ENCODE measurements at regions of chr1 and their contacts with region 1.

Region 1: DNA sequence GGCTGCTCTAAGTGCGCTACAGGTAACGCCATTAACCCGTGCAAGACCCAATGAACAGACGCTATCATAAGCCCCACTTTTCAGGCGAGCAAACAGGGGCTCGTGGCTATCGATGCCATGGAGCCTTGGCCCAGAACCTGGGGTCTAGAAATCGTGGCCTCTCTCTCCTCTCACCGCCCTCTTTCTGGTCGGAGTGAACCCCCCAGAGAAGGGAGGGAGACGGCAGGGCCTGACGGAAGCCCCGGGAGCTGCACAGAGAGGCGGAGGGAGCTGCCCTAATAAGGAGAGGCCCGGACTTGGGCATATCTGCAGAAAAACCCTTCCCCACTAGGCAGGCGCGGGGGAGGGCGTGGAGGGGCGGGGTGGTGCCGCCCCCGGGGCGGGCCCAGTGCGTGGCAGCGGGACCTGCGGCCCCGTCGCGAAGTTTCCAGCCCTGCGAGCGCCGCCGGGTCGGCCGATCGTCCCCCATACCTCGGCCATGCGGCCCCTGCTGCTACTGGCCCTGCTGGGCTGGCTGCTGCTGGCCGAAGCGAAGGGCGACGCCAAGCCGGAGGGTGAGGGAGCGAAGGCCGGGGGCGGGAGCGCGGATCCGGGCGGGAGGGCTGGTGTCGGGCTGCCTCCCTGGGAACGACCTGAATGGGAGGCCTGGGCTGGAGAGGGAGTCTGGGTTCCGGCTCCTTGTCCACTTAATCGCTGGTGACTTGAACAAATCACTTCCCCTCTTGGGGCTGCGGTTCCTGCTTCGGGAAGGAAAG is at the start of gene PLOD1:
- DNase-seq: peak; percentile 86
- ATAC-seq: peak; percentile 88
- H3K4me3 ChIP-seq: peak within 1 kb of the TSS; percentile 79
- H3K27ac ChIP-seq: peak within 1 kb of the TSS; percentile 10
- H3K4me1 ChIP-seq: peaks cover 30% of the 10 kb centered on the region
- H3K27me3 ChIP-seq: no peaks in the 10 kb centered on the region
- CTCF ChIP-seq: no peak
- total RNA-seq, gene PLOD1: 179 and 216 TPM in 2 replicates

Region 2: DNA sequence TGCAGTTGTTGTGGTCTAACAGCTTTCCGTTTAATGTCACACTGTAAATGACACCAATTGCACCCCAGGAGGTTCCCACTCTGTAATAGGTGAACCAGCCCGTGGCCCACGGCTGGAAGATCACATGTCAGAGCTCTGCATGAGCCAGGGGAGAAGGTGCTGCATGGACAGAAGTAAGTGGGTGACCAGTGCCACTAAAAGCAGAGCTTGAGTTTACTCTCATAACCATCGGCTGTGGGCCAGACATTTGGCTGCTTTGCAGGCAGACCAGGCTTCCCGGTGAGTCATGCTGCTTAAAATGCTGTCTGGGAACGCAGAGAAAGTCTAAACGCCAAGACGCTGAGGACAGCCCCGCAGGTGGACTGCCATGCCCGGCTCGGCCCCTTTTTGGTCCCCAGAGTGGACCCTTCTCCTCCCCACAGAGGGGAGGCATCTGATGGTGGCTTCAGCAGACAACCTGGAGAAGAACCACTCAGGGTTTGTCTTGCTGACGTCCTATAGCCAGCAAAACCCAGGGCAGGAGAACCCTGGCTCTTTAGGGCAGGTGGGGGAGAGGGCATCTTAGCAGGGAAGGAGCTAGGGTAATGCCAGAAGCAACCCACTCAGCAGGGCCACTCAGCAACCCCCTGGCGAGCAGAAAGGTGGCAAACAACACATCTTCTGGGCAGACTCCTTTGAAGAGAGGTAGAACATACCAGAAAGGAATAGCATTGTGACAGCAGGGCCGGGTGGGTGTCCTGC is 15.5 kb before region 1 on chr1:
- CTCF ChIA-PET with region 1: interaction called, 9 read pairs
- POLR2A ChIA-PET with region 1: interaction called, 17 read pairs
- intact Hi-C with region 1: no loop called
- DNase-seq: peak; percentile 86
- ATAC-seq: peak; percentile 97
- H3K4me3 ChIP-seq: no peak overlapping the region
- H3K27ac ChIP-seq: peak overlapping the region; percentile 43; the same call in 1 of the 2 replicates
- H3K4me1 ChIP-seq: peaks cover 21% of the 10 kb centered on the region
- H3K27me3 ChIP-seq: no peaks in the 10 kb centered on the region
- CTCF ChIP-seq: no peak

Region 3: DNA sequence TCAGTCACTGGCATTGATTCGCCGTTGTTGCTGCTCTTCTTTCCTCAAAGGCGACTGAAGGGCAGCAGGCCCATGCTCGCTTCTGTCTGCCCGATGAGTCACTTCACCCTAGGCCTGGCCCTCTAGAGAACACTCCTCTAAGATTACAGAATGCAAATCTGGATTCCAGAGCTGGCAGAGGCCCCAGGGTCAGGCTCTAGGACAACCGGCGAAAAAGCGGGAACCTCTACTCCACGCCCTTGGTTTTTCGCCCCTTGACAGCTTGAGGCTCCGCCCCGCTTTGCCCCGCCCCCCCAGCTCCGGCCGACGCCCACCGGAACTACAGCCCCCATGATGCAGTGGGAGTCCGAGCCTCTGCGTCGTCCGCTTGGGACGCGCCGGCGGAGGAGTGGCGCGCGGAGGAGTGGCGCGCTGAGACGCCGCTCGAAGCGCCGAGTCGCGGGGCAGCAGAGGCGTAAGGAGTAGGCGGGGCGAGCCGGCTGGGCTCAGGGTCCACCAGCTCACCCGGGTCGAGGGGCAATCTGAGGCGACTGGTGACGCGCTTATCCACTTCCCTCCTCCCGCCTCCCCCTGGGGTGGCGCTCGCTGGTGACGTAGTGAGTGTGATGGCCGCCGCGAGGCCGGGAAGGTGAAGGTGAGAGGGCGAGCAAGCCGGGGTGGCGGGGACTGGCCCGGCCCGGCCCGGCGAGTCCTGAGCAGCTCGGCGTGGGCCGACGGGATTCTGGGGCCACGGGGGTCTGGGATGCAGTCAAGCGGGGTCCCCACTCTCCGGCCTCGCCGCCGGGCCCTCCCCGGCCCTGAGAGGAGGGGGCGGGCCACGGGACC is 45.6 kb after region 1 on chr1 and contains the start of gene MFN2:
- CTCF ChIA-PET with region 1: no interaction called
- POLR2A ChIA-PET with region 1: interaction called, 21 read pairs
- intact Hi-C with region 1: loop called (anchors 5 kb)
- DNase-seq: peak; percentile 96
- ATAC-seq: peak; percentile 89
- H3K4me3 ChIP-seq: peak within 1 kb of the TSS; percentile 81
- H3K27ac ChIP-seq: peak within 1 kb of the TSS; percentile 81
- H3K4me1 ChIP-seq: peaks cover 28% of the 10 kb centered on the region
- H3K27me3 ChIP-seq: no peaks in the 10 kb centered on the region
- CTCF ChIP-seq: no peak
- total RNA-seq, gene MFN2: 97.8 and 101 TPM in 2 replicates

Region 4: DNA sequence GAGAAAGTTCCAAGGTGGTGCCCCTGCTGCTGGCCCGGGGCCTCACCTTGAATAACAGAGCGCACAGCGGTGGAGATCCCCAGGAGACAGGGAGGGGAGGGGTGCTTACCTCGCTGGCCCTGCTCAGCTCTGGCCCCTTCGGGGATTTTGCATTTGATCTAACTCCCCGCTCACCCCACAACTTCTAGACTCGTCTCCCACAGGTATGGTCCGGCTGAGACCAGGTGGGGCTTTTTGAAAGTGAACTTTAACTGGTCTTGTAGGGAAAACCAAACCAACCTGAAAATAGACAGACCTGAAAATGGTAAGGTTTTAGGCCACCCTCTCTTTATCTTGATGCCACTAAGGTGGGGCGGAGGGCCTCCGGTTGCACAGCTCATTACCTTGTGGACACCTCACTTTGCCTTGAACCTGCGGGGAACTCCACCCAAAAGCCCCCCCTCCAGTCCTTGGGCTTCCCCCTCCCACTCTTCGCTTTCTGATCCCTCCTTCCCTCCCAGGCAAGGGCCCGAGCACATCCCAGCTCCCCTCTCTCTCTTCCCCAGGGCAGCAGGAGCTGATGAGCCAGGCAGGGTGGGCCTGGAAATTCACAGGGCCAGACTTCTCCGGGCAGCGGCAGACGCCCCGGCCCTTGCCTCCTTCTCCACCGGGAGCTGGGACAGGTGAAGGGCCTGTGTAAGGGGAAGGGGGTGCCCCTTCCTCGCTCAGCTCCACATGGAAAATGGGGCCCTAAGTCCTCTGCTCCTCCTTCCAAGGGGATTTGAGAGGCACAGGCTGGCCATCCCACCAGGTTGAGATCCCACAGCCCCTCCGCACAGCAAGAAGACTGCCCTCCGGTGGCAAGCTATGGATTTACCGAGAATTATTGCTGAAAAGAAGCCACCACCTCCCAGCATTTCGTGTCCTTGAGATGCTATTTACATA is 144.7 kb after region 1 on chr1:
- CTCF ChIA-PET with region 1: no interaction called
- POLR2A ChIA-PET with region 1: interaction called, 11 read pairs
- intact Hi-C with region 1: no loop called
- DNase-seq: peak; percentile 59
- ATAC-seq: peak; percentile 53
- H3K4me3 ChIP-seq: no peak overlapping the region
- H3K27ac ChIP-seq: no peak overlapping the region
- H3K4me1 ChIP-seq: 0 out of 2 replicates have a peak, but pooled peaks cover 4% of the 10 kb centered on the region
- H3K27me3 ChIP-seq: no peaks in the 10 kb centered on the region
- CTCF ChIP-seq: peak; percentile 68

Measured in PC-3 (cell line).